OCI-LY7 (cell line): ENCODE measurements at regions of chr10 and their contacts with region 1.

Region 1: DNA sequence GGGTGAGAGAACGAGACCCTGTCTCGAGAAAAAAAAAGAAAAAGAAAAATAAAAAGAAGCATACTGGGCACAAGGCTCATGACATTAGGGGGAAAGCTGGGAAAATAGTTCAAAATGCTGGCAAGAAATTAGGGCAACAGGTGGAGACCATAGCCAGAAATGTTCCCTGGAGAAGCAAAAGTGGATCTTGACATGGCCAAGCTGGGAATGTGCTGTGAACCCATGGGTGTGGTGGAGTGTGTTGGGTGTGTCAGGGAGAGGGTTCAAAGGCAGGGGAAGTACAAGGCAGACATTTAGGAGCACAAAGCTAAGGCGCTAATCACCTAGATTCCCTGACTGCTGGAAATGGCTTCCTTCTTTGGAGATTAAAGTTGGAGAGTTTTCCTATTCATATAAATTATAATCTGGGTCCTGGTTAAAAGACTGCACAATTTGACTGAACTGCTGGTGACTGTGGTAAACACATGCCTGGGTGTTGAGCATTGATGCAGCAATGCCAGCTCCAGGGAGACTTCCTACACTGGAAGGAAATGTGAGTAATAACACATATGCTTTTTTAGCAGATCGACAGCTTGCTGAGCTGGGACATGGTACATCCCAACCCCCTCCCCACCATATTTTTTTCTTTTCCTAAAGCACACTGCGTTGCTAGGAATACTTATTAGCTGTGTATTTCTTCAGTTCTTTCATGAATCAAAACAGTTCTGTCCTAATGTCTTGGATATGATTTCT is 70.1 kb upstream of the ARHGAP21 start:
- DNase-seq: no peak
- H3K4me3 ChIP-seq: no peak overlapping the region
- H3K27ac ChIP-seq: no peak overlapping the region
- H3K4me1 ChIP-seq: no peaks in the 10 kb centered on the region
- CTCF ChIP-seq: no peak

Region 2: DNA sequence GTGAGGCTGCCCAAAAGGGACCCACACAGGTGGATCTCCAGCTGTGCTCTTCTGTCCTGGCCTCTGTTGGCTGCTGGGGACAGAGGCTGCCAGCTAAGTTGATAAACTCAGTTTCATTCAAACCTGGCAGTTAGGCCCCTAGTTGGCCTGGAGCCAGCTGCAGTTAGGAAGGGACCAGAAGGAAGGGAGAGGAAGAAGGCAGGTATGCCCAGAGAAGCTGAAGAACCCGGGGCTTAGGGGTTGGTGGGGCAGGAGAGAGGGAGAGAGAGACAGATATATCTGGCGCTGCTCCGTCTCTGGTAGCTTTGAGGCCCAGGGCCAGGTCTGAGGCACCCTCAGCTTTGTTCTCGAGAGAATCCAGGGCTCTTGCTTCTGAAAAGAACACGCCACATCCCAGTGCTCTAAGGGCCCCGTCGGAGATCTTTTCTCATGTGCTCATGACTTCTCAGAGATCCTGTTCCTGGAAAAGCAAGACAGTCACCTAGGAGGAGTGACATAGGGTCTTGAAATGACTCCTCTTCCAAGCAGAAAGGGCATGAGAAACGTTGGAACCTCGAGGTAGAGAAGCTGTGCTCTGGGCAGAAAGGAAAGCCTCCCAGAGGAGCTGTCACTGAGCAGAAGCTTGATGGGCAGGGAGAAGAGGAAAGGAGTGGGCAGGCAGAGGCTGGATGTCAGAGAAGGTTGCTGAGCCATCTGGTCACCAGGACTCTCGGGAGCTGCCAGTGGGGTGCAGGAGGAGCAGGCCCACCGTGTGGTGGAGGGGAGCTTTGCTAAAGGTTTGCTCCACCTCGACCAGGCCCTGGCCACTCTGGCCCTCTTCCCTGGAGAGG is 223.8 kb before region 1 on chr10:
- CTCF ChIA-PET with region 1: no interaction called
- POLR2A ChIA-PET with region 1: interaction called, 11 read pairs
- intact Hi-C with region 1: no loop called
- DNase-seq: no peak
- H3K4me3 ChIP-seq: no peak overlapping the region
- H3K27ac ChIP-seq: no peak overlapping the region
- H3K4me1 ChIP-seq: no peaks in the 10 kb centered on the region
- CTCF ChIP-seq: no peak